Heart right ventricle (tissue), 16 donors: ENCODE measurements at regions of chr18 and their contacts with region 1.

Region 1: GRCh38 chr18:5998907-5999306 is 103.6 kb upstream of the TMEM200C start:
- DNase-seq: no peak
- ATAC-seq: no peak
- H3K4me3 ChIP-seq: no peak overlapping the region
- H3K27ac ChIP-seq: no peak overlapping the region
- H3K4me1 ChIP-seq: no peaks in the 10 kb centered on the region
- H3K27me3 ChIP-seq: no peaks in the 10 kb centered on the region
- CTCF ChIP-seq: no peak

Region 2: GRCh38 chr18:5939801-5940667 is 58.9 kb before region 1 on chr18:
- intact Hi-C with region 1: loop called in 1 of 10 experiments (anchors 10 kb)
- DNase-seq: no peak
- ATAC-seq: no peak
- H3K4me3 ChIP-seq: no peak overlapping the region
- H3K27ac ChIP-seq: no peak overlapping the region
- H3K4me1 ChIP-seq: no peaks in the 10 kb centered on the region
- H3K27me3 ChIP-seq: peaks cover 0 to 13% (median 0%) of the 10 kb centered on the region in 7 donors
- CTCF ChIP-seq: no peak